CD14-positive monocyte (primary cell): ENCODE measurements at regions of chr7 and their contacts with region 1.

Region 1: DNA sequence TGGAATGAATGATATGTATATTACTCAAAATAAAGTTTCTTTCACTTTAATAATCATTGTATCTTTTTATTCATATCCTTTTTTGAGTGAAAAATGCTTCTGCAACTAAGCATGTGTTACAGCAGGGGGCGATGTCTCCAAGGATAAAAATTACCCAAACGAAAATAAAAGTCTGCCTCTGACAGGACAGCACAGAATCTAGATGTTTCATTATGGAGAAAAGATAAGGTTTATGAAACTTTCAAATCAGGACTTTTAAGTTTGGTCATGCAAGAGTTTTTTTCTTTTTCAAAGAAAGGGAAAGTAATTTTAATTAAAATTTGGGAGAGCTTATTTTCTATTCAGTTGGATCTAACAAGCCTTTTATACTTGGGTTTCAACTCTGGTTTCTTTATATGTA is 48.4 kb downstream of the TES start:
- DNase-seq: peak; percentile 11 to 31 (median 21)
- H3K4me3 ChIP-seq: no peak overlapping the region
- H3K4me3 Mint-ChIP-seq: no peak overlapping the region
- H3K27ac ChIP-seq: no peak overlapping the region
- H3K27ac Mint-ChIP-seq: no peak overlapping the region
- H3K4me1 ChIP-seq: no peaks in the 10 kb centered on the region
- H3K4me1 Mint-ChIP-seq: peaks cover 1% of the 10 kb centered on the region
- H3K27me3 ChIP-seq: no peaks in the 10 kb centered on the region
- H3K27me3 Mint-ChIP-seq: peaks cover 0 to 1% (median 0%) of the 10 kb centered on the region in 3 donors
- CTCF ChIP-seq: peak; percentile 82

Region 2: DNA sequence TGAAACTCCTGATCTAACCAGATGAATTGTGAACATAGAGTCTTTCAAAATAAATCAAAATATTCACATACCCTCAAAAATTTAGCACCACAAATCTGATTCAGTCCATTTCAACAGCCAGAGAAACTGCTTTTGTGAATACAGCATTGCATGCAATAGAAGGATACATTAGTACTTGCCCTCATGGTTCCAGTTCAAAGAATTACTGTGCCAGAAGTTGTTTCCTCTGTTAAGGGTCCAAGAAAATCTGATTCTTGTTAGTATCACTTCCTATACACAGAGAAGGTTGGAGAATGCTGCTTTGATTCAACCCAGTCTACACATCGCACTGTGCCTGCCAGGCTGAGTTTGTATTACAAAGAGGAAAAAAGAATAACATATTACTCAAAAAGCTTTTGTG is 343.8 kb before region 1 on chr7:
- intact Hi-C with region 1: no loop called
- DNase-seq: no peak
- H3K4me3 ChIP-seq: no peak overlapping the region
- H3K4me3 Mint-ChIP-seq: no peak overlapping the region
- H3K27ac ChIP-seq: no peak overlapping the region
- H3K27ac Mint-ChIP-seq: peak overlapping the region in 1 of 7 donors; percentile 23
- H3K4me1 ChIP-seq: peaks cover 6 to 13% of the 10 kb centered on the region in 2 donors
- H3K4me1 Mint-ChIP-seq: peaks cover 16% of the 10 kb centered on the region
- H3K27me3 ChIP-seq: no peaks in the 10 kb centered on the region
- H3K27me3 Mint-ChIP-seq: peaks cover 0 to 2% (median 0%) of the 10 kb centered on the region in 3 donors
- CTCF ChIP-seq: no peak

Region 3: DNA sequence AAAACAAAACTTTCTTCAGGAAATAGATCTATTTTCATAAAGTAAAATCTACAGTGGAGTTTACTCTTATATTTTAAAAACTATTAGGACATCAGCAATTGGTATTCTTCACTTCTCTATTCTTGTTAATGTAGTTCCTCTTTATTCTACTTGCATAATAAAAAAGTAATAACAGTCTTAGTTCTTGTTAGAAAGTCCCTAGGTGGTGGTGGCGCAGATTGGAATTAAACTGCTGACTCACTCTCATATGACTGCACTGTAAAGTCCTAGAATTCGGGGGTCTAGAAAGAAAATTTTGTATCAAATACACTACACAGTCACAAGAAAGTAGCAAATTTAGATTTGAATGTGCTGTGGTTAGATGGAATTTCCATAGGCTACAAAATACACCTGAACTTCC is 93.0 kb before region 1 on chr7:
- intact Hi-C with region 1: no loop called
- DNase-seq: peak; percentile 83 to 94 (median 92)
- H3K4me3 ChIP-seq: peak overlapping the region; percentile 12 to 55 (median 40)
- H3K4me3 Mint-ChIP-seq: peak overlapping the region; percentile 49 to 77
- H3K27ac ChIP-seq: peak overlapping the region; percentile 18 to 97
- H3K27ac Mint-ChIP-seq: peak overlapping the region; percentile 95 to 98 (median 96)
- H3K4me1 ChIP-seq: peaks cover 46 to 57% of the 10 kb centered on the region in 2 donors
- H3K4me1 Mint-ChIP-seq: peaks cover 51% of the 10 kb centered on the region
- H3K27me3 ChIP-seq: no peaks in the 10 kb centered on the region
- H3K27me3 Mint-ChIP-seq: no peaks in the 10 kb centered on the region
- CTCF ChIP-seq: no peak

Region 4: DNA sequence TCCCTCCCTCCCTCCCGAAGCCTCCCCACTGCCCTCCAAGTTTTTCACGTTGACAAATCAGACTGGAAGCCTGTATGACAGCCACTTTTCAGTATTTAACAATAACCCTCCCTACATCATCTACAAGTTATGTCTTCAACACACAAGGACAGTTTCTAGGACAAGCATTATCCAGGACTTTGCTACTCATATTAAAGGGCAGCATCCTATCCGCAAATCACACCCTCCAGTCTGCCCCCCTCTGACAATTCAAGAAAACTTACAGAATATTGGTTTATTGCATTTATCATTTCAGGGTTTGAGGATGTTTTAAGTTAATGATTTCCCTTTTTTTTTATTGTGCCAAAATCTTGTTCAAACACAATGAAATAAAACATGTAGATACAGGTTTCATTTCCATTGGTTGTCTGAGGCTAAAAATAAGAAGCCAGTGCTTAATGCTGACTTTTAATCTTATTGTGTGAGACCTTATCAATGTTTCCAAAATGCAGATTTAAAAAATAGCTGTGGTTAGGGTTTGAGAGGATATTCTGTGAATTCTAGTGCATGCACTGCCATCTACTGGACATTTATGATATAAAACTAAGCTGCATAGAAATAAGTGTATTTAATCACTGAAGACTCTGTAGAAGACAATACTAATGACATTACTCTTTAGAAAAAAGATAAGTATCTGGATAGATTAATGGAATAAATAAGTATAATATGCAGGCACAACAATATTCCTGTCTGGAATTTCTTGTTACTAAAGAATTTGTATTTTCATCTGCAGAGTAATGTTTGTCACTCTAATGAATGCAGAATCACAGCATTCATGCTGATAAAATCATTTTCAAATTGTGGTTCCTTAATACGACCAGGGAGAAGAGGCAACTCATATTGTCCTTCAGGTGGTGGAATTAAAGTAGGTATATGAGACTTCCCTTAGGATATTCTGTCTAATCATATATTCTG is 330.2 kb after region 1 on chr7:
- intact Hi-C with region 1: loop called in 1 of 2 experiments (anchors 5 kb)
- DNase-seq: peak in 2 of 3 donors; percentile 24 to 55
- H3K4me3 ChIP-seq: no peak overlapping the region
- H3K4me3 Mint-ChIP-seq: no peak overlapping the region
- H3K27ac ChIP-seq: no peak overlapping the region
- H3K27ac Mint-ChIP-seq: peak overlapping the region in 1 of 7 donors; percentile 17
- H3K4me1 ChIP-seq: peaks cover 20 to 30% of the 10 kb centered on the region in 2 donors
- H3K4me1 Mint-ChIP-seq: peaks cover 28% of the 10 kb centered on the region
- H3K27me3 ChIP-seq: peaks cover 23 to 27% of the 10 kb centered on the region in 2 donors
- H3K27me3 Mint-ChIP-seq: peaks cover 8 to 21% (median 15%) of the 10 kb centered on the region in 3 donors
- CTCF ChIP-seq: peak; percentile 93